MCF 10A (cell line): ENCODE measurements at regions of chr1 and their contacts with region 1.

Region 1: DNA sequence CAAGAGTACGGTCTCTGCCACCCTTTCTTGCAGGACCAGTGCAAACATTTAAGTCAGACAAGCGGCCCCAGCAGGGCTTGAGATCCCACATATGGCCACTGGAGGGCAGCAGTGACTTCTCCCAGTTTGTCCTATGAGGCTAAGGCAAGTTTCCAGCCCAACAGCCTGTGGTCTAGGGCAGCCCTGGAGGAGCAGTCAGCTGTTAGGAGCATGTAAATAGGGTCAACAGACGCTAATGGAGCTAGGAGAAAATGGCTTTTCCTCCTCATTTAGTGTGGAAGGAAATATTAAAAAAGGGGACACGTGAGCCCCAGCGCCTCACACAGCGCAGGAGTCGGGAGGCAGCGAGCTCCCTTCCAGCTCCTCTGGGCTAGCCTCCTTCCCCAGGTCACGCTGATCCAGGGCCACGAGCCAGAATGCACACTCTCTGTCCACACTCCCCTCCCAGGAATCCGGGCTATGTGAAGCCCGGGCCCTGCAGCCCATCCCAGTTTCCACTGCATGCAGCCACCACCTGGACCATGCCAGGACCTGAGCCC is 95.6 kb downstream of the LAMC2 start:
- DNase-seq: peak; percentile 96
- H3K4me3 Mint-ChIP-seq: no peak overlapping the region
- H3K27ac Mint-ChIP-seq: peak overlapping the region; percentile 60
- H3K4me1 Mint-ChIP-seq: peaks cover 56% of the 10 kb centered on the region
- H3K27me3 Mint-ChIP-seq: no peaks in the 10 kb centered on the region
- CTCF ChIP-seq: peak; percentile 92

Region 2: GRCh38 chr1:183023601-183024316 is 257.9 kb before region 1 on chr1:
- CTCF ChIA-PET with region 1: interaction called, 6 read pairs
- POLR2A ChIA-PET with region 1: interaction called, 39 read pairs
- intact Hi-C with region 1: loop called (anchors 1 kb)
- DNase-seq: peak; percentile 90
- H3K4me3 Mint-ChIP-seq: peak overlapping the region; percentile 93
- H3K27ac Mint-ChIP-seq: peak overlapping the region; percentile 97
- H3K4me1 Mint-ChIP-seq: peaks cover 54% of the 10 kb centered on the region
- H3K27me3 Mint-ChIP-seq: no peaks in the 10 kb centered on the region
- CTCF ChIP-seq: peak; percentile 55

Region 3: DNA sequence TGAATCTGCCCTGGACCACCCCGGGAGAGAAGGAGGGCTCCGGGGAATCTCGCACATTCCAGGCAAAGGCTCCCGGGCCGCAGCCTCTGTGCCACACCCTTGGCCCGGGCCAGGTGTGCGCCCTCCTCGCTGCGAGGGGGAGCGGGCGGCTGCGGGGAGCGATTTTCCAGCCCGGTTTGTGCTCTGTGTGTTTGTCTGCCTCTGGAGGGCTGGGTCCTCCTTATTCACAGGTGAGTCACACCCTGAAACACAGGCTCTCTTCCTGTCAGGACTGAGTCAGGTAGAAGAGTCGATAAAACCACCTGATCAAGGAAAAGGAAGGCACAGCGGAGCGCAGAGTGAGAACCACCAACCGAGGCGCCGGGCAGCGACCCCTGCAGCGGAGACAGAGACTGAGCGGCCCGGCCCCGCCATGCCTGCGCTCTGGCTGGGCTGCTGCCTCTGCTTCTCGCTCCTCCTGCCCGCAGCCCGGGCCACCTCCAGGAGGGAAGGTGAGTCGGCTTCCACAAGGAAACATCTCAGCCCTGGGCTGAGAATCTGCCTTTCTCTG is 95.6 kb before region 1 on chr1 and contains the start of gene LAMC2:
- CTCF ChIA-PET with region 1: interaction called, 5 read pairs
- POLR2A ChIA-PET with region 1: interaction called, 13 read pairs
- intact Hi-C with region 1: loop called (anchors 2 kb)
- DNase-seq: peak; percentile 98
- H3K4me3 Mint-ChIP-seq: peak within 1 kb of the TSS; percentile 92
- H3K27ac Mint-ChIP-seq: peak within 1 kb of the TSS; percentile 98
- H3K4me1 Mint-ChIP-seq: peaks cover 36% of the 10 kb centered on the region
- H3K27me3 Mint-ChIP-seq: no peaks in the 10 kb centered on the region
- CTCF ChIP-seq: peak; percentile 70
- total RNA-seq, gene LAMC2: 751 and 884 TPM in 2 replicates

Region 4: GRCh38 chr1:183244466-183244865 is 37.2 kb before region 1 on chr1:
- CTCF ChIA-PET with region 1: interaction called, 9 read pairs
- POLR2A ChIA-PET with region 1: interaction called, 40 read pairs
- intact Hi-C with region 1: no loop called
- DNase-seq: peak; percentile 91
- H3K4me3 Mint-ChIP-seq: no peak overlapping the region
- H3K27ac Mint-ChIP-seq: no peak overlapping the region
- H3K4me1 Mint-ChIP-seq: peaks cover 27% of the 10 kb centered on the region
- H3K27me3 Mint-ChIP-seq: no peaks in the 10 kb centered on the region
- CTCF ChIP-seq: no peak

Region 5: DNA sequence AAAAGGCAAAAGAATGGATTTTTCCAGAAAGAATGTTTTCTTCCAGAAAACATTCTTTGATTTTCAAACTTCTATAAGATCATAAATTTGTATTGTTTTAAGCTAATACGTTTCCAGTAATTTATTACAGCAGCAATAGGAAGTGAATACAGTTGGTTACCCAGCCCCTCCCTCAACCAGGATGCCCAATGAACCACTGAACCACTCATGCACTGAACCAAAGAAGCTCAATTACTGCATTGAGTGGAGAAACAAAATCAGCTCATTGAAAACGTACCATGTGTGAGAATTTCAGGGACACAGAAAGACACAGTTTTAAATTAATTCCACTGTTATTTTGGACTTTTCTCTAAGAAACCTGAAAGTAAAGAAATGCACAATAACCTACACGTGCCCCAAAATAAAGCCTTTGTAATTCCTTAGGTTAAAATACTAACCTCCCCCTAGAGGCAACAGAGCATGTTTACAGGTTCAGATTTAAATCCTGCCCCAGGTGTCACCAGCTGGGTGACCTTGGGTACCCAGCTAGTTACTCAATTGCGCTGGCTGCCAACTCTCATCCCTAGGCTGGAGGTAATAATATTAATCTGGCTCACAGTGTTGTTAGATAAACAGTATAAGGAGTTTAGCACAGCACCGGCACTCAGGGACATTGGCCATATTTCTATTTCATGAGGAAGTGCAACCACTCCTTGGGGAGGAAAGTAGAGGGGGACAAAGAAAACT is 24.9 kb after region 1 on chr1:
- CTCF ChIA-PET with region 1: interaction called, 89 read pairs
- POLR2A ChIA-PET with region 1: interaction called, 3 read pairs
- intact Hi-C with region 1: no loop called
- DNase-seq: peak; percentile 46
- H3K4me3 Mint-ChIP-seq: no peak overlapping the region
- H3K27ac Mint-ChIP-seq: no peak overlapping the region
- H3K4me1 Mint-ChIP-seq: peaks cover 21% of the 10 kb centered on the region
- H3K27me3 Mint-ChIP-seq: no peaks in the 10 kb centered on the region
- CTCF ChIP-seq: peak; percentile 32

Region 6: GRCh38 chr1:183543619-183544204 is 262.1 kb after region 1 on chr1:
- CTCF ChIA-PET with region 1: interaction called, 14 read pairs
- POLR2A ChIA-PET with region 1: no interaction called
- intact Hi-C with region 1: loop called (anchors 1 kb)
- DNase-seq: peak; percentile 77
- H3K4me3 Mint-ChIP-seq: no peak overlapping the region
- H3K27ac Mint-ChIP-seq: no peak overlapping the region
- H3K4me1 Mint-ChIP-seq: peaks cover 7% of the 10 kb centered on the region
- H3K27me3 Mint-ChIP-seq: no peaks in the 10 kb centered on the region
- CTCF ChIP-seq: peak; percentile 77

Region 7: GRCh38 chr1:183915625-183916510 is 634.2 kb after region 1 on chr1:
- CTCF ChIA-PET with region 1: interaction called, 3 read pairs
- POLR2A ChIA-PET with region 1: no interaction called
- intact Hi-C with region 1: loop called (anchors 5 kb)
- DNase-seq: peak; percentile 99
- H3K4me3 Mint-ChIP-seq: peak overlapping the region; percentile 27
- H3K27ac Mint-ChIP-seq: peak overlapping the region; percentile 55
- H3K4me1 Mint-ChIP-seq: peaks cover 13% of the 10 kb centered on the region
- H3K27me3 Mint-ChIP-seq: no peaks in the 10 kb centered on the region
- CTCF ChIP-seq: peak; percentile 90